Naive thymus-derived CD4-positive, alpha-beta T cell (primary cell): ENCODE measurements at regions of chr5 and their contacts with region 1.

Region 1: GRCh38 chr5:40386289-40386688 is 293.4 kb upstream of the PTGER4 start:
- DNase-seq: no peak
- ATAC-seq: peak; percentile 62
- H3K4me3 ChIP-seq: no peak overlapping the region
- H3K4me3 Mint-ChIP-seq: peak overlapping the region in 3 of 10 donors; percentile 38 to 55 (median 48)
- H3K27ac ChIP-seq: peak overlapping the region; percentile 26
- H3K27ac Mint-ChIP-seq: peak overlapping the region in 4 of 9 donors; percentile 26 to 79 (median 54)
- H3K4me1 ChIP-seq: peaks cover 23 to 66% of the 10 kb centered on the region in 2 donors
- H3K4me1 Mint-ChIP-seq: peaks cover 37 to 86% (median 66%) of the 10 kb centered on the region in 7 donors
- H3K27me3 ChIP-seq: no peaks in the 10 kb centered on the region
- H3K27me3 Mint-ChIP-seq: no peaks in the 10 kb centered on the region

Region 2: DNA sequence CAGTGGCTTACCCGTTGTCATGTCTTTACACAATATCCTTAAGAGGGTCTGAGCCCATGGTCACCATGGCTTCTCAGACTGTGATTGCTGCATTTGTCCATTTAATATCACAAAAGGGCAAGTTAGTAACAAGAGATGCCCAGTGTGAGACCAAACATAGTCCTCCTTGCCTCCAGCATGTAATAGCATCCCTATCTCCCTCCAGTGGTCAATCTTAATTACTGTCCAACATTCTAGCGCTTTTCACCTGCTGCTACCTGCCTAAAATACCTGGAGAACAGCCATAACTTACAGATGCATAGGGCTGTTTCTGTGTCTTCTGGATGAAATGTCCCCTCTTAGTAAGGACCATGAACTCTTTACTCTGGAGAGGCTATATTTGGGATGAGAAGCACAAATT is 694.3 kb before region 1 on chr5:
- CTCF ChIA-PET with region 1: no interaction called
- POLR2A ChIA-PET with region 1: no interaction called
- intact Hi-C with region 1: no loop called
- DNase-seq: no peak
- ATAC-seq: no peak
- H3K4me3 ChIP-seq: no peak overlapping the region
- H3K4me3 Mint-ChIP-seq: no peak overlapping the region
- H3K27ac ChIP-seq: no peak overlapping the region
- H3K27ac Mint-ChIP-seq: no peak overlapping the region
- H3K4me1 ChIP-seq: no peaks in the 10 kb centered on the region
- H3K4me1 Mint-ChIP-seq: no peaks in the 10 kb centered on the region
- H3K27me3 ChIP-seq: no peaks in the 10 kb centered on the region
- H3K27me3 Mint-ChIP-seq: peaks cover 4 to 46% (median 28%) of the 10 kb centered on the region in 5 donors

Region 3: GRCh38 chr5:40223884-40224402 is 162.3 kb before region 1 on chr5:
- CTCF ChIA-PET with region 1: no interaction called
- POLR2A ChIA-PET with region 1: no interaction called
- intact Hi-C with region 1: loop called in 1 of 2 experiments (anchors 5 kb)
- DNase-seq: peak in 1 of 9 donors; percentile 34
- ATAC-seq: peak; percentile 40
- H3K4me3 ChIP-seq: no peak overlapping the region
- H3K4me3 Mint-ChIP-seq: peak overlapping the region in 1 of 10 donors; percentile 70
- H3K27ac ChIP-seq: no peak overlapping the region
- H3K27ac Mint-ChIP-seq: peak overlapping the region in 1 of 9 donors; percentile 79
- H3K4me1 ChIP-seq: peaks cover 0 to 4% of the 10 kb centered on the region in 2 donors
- H3K4me1 Mint-ChIP-seq: peaks cover 0 to 36% (median 6%) of the 10 kb centered on the region in 7 donors
- H3K27me3 ChIP-seq: no peaks in the 10 kb centered on the region
- H3K27me3 Mint-ChIP-seq: peaks cover 0 to 5% (median 0%) of the 10 kb centered on the region in 5 donors

Region 4: DNA sequence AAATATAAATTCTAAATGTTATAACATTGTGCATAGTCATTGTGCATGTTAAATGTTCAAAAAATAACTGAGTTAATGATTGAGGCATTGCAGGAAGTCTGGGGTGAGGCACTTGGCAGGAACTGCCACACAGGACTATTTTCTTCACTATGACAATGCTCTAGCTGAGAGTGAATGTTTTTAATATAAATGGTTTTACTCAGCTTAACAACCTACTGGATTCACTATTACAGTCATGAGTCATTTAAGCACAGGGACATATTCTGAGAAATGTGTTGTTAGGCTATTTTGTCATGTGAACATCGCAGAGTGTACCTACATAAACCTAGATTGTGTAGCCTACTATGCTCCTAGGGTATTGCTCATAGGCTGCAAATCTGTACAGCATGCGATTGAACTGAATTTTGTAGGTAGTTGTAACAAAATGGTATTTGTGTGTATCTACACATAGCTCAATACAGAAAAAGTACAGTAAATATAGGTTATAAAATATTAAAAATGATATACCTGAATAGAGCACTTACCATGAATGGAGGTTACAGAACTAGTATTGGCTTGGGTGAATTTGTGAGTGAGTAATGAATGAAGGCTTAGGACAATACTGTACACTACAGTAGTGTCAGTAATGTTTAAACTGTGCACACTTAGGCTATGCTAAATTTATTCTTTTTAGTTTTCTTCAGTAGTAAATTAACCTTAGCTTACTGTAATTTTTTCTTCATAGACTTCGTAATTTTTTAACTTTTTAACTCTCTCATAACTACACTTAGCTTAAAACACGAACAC is 52.6 kb before region 1 on chr5:
- CTCF ChIA-PET with region 1: no interaction called
- POLR2A ChIA-PET with region 1: no interaction called
- intact Hi-C with region 1: loop called in 1 of 2 experiments (anchors 5 kb)
- DNase-seq: no peak
- ATAC-seq: peak; percentile 38
- H3K4me3 ChIP-seq: no peak overlapping the region
- H3K4me3 Mint-ChIP-seq: no peak overlapping the region
- H3K27ac ChIP-seq: no peak overlapping the region
- H3K27ac Mint-ChIP-seq: no peak overlapping the region
- H3K4me1 ChIP-seq: peaks cover 0 to 46% of the 10 kb centered on the region in 2 donors
- H3K4me1 Mint-ChIP-seq: peaks cover 0 to 24% (median 0%) of the 10 kb centered on the region in 7 donors
- H3K27me3 ChIP-seq: no peaks in the 10 kb centered on the region
- H3K27me3 Mint-ChIP-seq: no peaks in the 10 kb centered on the region

Region 5: DNA sequence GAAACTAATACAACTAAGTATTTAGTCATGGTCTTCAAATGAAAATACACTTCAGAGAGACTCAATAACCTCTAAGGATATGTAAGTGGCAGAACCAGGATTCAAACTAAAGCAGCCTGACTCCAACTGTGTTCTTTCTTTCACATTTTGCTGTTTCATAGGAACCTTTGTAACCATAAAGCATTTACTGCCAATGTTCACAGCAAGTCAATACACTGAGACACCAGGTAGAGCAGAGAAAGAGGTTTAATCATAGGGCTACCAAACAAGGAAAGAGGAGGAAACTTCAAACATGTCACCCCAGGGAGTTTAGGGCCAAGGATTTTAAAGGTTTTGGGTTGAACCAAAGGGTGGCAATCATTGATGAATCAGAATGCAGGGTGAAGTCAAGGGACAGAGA is 30.3 kb after region 1 on chr5:
- CTCF ChIA-PET with region 1: no interaction called
- POLR2A ChIA-PET with region 1: no interaction called
- intact Hi-C with region 1: no loop called
- DNase-seq: no peak
- ATAC-seq: no peak
- H3K4me3 ChIP-seq: no peak overlapping the region
- H3K4me3 Mint-ChIP-seq: no peak overlapping the region
- H3K27ac ChIP-seq: no peak overlapping the region
- H3K27ac Mint-ChIP-seq: peak overlapping the region in 1 of 9 donors; percentile 19
- H3K4me1 ChIP-seq: peaks cover 4 to 5% of the 10 kb centered on the region in 2 donors
- H3K4me1 Mint-ChIP-seq: peaks cover 3 to 14% (median 7%) of the 10 kb centered on the region in 7 donors
- H3K27me3 ChIP-seq: no peaks in the 10 kb centered on the region
- H3K27me3 Mint-ChIP-seq: no peaks in the 10 kb centered on the region

Region 6: DNA sequence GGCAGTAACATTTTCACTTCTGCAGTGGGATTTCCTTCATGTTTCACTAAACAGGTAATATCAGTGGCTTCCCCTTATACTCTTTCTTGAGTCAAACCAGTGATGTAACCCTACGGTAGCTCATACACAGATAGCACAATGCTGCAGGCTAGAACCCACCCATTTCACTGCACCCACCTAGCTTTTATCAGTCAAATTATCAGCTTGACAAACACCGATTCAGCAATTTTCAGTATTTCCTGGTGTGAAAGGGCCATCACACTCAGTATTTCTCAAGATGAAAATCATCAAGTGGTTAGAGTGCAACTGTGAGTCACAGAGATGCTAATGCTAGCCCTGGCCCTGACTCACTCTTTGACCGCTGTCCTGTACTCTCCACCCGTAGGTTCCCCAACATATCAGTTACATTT is 51.2 kb after region 1 on chr5:
- CTCF ChIA-PET with region 1: interaction called, 3 read pairs
- POLR2A ChIA-PET with region 1: no interaction called
- intact Hi-C with region 1: loop called in 1 of 2 experiments (anchors 1 kb)
- DNase-seq: peak in 1 of 9 donors; percentile 7
- ATAC-seq: peak; percentile 67
- H3K4me3 ChIP-seq: peak overlapping the region; percentile 24
- H3K4me3 Mint-ChIP-seq: peak overlapping the region in 6 of 10 donors; percentile 10 to 75 (median 38)
- H3K27ac ChIP-seq: peak overlapping the region; percentile 79
- H3K27ac Mint-ChIP-seq: peak overlapping the region; percentile 71 to 96 (median 91)
- H3K4me1 ChIP-seq: peaks cover 34 to 39% of the 10 kb centered on the region in 2 donors
- H3K4me1 Mint-ChIP-seq: peaks cover 23 to 82% (median 68%) of the 10 kb centered on the region in 7 donors
- H3K27me3 ChIP-seq: no peaks in the 10 kb centered on the region
- H3K27me3 Mint-ChIP-seq: no peaks in the 10 kb centered on the region

Region 7: GRCh38 chr5:40578501-40579451 is 192.5 kb after region 1 on chr5:
- CTCF ChIA-PET with region 1: no interaction called
- POLR2A ChIA-PET with region 1: no interaction called
- intact Hi-C with region 1: loop called in 1 of 2 experiments (anchors 5 kb)
- DNase-seq: peak in 4 of 9 donors; percentile 7 to 45 (median 8)
- ATAC-seq: peak; percentile 45
- H3K4me3 ChIP-seq: no peak overlapping the region
- H3K4me3 Mint-ChIP-seq: peak overlapping the region in 9 of 10 donors; percentile 61 to 83 (median 79)
- H3K27ac ChIP-seq: peak overlapping the region; percentile 11
- H3K27ac Mint-ChIP-seq: peak overlapping the region; percentile 6 to 85 (median 73)
- H3K4me1 ChIP-seq: no peaks in the 10 kb centered on the region
- H3K4me1 Mint-ChIP-seq: peaks cover 14 to 35% (median 24%) of the 10 kb centered on the region in 7 donors
- H3K27me3 ChIP-seq: no peaks in the 10 kb centered on the region
- H3K27me3 Mint-ChIP-seq: no peaks in the 10 kb centered on the region